Sigmoid colon (tissue), 7 donors: ENCODE measurements at regions of chr9 and their contacts with region 1.

Region 1: DNA sequence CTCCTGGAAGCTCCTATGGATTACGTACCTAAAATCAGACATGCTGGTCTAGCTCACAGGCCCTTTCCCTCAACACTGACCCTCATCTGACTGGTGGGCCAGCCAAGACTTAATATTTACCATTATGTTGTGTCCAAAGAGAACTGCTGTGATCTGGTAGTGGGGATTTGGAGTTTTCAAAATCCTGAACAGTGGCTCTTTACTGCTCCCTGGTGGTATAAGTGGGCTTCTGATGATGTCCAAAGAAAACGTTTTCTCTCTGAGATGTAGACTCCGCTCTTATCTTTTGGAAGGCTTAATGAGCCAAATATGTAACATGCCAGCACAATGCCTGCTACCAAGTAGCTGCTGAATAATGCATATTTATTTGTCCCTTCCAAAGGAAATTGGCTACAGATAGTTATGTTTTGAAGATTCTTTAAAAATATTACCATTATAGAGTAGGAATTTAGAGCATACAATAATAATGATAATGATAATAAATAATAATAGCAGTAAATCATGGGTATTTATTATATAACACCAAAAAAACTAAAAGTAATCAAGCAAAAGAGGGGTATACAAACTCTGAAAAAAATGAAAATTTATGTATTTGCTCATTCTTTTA is 406.6 kb upstream of the TNC start:
- DNase-seq: no peak
- H3K4me3 ChIP-seq: no peak overlapping the region
- H3K27ac ChIP-seq: peak overlapping the region in 3 of 4 donors; percentile 71 to 79 (median 73)
- H3K4me1 ChIP-seq: peaks cover 0 to 58% (median 41%) of the 10 kb centered on the region in 4 donors
- H3K27me3 ChIP-seq: no peaks in the 10 kb centered on the region
- CTCF ChIP-seq: peak; percentile 66 to 86 (median 78)
- EP300 ChIP-seq: no peak
- POLR2A ChIP-seq: no peak

Region 2: DNA sequence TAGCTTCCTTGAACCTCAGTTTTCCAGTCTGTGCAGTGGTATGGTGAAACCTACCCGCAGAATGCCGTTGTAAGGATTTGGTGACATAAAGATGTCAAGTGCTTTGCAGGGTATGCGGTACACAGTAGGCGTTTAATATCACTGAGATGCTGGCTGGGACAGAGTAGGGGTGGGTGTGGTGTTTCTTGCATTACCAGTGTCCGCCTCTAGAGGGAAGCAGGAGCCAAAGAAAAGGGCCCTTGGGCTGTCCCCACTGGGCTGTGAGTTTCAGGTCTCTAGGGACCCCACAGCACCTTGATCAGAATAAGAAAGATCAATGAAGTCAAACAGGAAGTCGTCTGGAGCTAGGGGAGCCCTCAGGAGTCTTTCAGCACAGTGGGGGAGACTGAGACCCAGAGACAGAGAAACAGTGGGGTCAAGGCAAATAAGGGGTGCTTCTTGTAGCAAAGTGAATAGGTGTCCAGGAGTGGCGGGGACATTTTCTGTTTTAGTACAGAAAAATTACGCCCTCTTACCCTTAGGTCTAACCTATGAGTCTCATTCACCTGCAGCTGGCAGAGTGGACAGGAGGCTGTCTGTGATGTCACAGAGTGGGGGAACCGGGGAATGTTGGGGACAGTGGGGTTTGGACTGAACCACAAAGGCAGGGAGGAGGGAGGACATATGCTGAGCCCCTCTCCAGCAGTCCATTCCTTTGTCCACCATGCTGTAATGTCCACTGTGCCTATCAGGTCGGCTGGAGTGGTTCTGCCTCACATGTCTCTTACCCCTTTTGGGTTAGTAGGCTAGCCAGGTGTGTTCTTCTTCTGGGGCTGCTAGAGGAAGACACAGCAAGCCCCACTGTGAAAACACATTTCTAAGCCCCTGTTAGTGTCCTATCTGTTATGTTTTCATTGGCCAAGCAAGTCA is 862.2 kb before region 1 on chr9:
- intact Hi-C with region 1: loop called (anchors 5 kb)
- DNase-seq: no peak
- H3K4me3 ChIP-seq: no peak overlapping the region
- H3K27ac ChIP-seq: no peak overlapping the region
- H3K4me1 ChIP-seq: no peaks in the 10 kb centered on the region
- H3K27me3 ChIP-seq: no peaks in the 10 kb centered on the region
- CTCF ChIP-seq: peak; percentile 41 to 90 (median 69)
- EP300 ChIP-seq: no peak
- POLR2A ChIP-seq: no peak

Region 3: GRCh38 chr9:114738581-114739316 is 785.8 kb before region 1 on chr9:
- intact Hi-C with region 1: loop called (anchors 2 kb)
- DNase-seq: peak; percentile 86
- H3K4me3 ChIP-seq: no peak overlapping the region
- H3K27ac ChIP-seq: no peak overlapping the region
- H3K4me1 ChIP-seq: no peaks in the 10 kb centered on the region
- H3K27me3 ChIP-seq: no peaks in the 10 kb centered on the region
- CTCF ChIP-seq: peak; percentile 65 to 80 (median 74)
- EP300 ChIP-seq: no peak
- POLR2A ChIP-seq: no peak

Region 4: DNA sequence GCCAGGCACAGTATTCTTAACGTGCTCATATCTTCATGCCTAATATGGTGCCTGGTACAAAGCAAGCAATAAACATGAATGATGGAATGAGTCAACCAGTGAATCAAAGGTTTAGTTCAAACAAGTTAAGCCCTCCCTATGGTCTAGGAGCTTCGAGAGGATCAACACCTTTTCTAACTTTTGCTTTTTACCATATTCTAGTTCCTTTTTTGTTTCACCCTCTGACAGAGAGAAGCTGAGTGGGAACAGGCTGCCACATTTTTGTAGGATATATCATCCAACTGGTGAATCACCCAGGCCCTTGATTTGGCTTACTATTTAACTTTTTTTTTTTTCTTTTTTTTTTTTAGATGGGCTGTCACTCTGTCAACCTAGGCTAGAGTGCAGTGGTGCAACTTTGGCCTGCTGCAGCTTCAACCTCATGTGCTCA is 367.3 kb before region 1 on chr9:
- intact Hi-C with region 1: loop called (anchors 5 kb)
- DNase-seq: peak; percentile 66
- H3K4me3 ChIP-seq: no peak overlapping the region
- H3K27ac ChIP-seq: peak overlapping the region; percentile 69 to 85 (median 78)
- H3K4me1 ChIP-seq: peaks cover 0 to 54% (median 46%) of the 10 kb centered on the region in 4 donors
- H3K27me3 ChIP-seq: no peaks in the 10 kb centered on the region
- CTCF ChIP-seq: no peak
- EP300 ChIP-seq: peak in 2 of 4 donors; percentile 28 to 40
- POLR2A ChIP-seq: no peak

Region 5: DNA sequence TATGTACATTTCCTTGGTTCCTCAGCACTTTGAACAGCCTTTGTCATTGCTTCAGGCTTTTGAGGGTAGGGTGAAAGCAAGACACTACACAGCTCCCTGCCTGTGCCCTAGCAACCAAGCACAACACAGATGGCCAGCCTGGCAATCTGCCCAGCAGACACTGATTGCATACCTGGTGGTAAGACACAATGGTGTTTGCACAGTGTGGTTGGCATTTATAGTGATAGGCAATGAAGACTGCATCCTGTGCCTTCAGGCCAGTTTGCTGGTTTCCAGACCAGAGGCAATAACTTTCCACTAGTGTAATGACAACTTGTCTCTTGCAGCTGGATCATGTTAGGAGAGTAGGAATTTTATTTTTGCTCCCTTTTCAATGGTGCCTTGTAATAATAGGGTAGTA is 262.1 kb before region 1 on chr9:
- intact Hi-C with region 1: loop called (anchors 2 kb)
- DNase-seq: peak; percentile 95
- H3K4me3 ChIP-seq: no peak overlapping the region
- H3K27ac ChIP-seq: peak overlapping the region in 3 of 4 donors; percentile 65 to 74 (median 72)
- H3K4me1 ChIP-seq: peaks cover 0 to 42% (median 30%) of the 10 kb centered on the region in 4 donors
- H3K27me3 ChIP-seq: no peaks in the 10 kb centered on the region
- CTCF ChIP-seq: no peak
- EP300 ChIP-seq: peak; percentile 75 to 95 (median 88)
- POLR2A ChIP-seq: no peak

Region 6: DNA sequence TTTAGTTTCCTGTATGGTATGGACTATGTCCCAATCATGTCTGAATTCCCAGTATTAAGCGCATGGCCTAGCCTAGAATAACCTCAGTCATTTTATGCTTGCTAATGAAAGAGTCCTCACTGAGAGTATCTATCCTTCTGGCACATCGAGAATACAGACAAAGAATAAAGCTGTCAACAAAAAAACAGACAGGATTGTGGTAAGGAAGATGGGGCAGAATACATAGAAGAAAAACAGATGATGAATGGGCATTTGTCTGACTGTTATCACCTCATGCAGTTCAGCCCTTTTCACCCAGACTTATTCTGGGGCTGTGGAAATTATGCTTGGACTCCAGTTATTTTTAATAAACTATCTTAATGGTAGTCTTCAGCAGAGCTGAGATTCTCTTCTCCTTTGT is 42.8 kb before region 1 on chr9:
- intact Hi-C with region 1: no loop called
- DNase-seq: no peak
- H3K4me3 ChIP-seq: no peak overlapping the region
- H3K27ac ChIP-seq: no peak overlapping the region
- H3K4me1 ChIP-seq: no peaks in the 10 kb centered on the region
- H3K27me3 ChIP-seq: no peaks in the 10 kb centered on the region
- CTCF ChIP-seq: no peak
- EP300 ChIP-seq: no peak
- POLR2A ChIP-seq: no peak

Region 7: DNA sequence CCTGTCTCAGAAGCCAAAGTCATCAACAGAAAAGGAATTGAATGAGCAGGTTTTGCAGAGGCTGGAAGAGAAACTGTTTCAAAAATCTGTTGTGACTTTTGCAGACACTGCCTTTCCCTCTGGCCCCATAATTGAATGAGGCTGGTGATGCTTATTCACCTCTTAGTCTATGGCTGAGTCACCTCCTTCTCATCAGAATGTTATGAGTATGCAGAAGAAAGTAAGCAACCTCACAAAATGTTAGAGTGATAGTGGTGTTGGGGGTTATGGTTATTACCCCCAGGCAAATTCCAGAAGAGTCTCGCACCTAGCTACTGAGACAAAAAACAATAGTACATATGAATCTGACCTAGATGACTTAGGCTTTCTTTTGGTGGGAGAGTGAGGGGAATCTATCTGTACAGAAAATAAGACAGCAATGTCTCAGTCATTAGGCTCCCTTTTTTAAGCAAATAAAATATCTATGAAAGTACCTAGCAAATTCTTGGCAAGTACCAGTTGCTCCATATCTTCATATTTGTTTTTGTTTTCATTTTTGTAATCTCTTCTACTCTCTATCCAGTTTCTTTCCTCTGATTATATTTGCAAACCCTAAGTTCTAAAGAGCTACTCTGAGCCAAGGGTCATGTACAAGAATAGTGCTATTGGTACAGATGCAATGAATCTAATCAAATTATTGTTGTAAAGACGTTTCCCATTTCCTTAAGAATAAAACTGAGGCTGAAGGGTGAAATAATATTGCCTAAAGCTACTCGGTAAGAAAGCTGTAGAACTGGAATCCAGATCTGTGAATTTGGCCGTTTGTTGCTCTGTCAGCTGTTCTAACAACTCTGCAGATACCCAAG is 91.5 kb after region 1 on chr9:
- intact Hi-C with region 1: no loop called
- DNase-seq: no peak
- H3K4me3 ChIP-seq: no peak overlapping the region
- H3K27ac ChIP-seq: no peak overlapping the region
- H3K4me1 ChIP-seq: peaks cover 0 to 12% (median 7%) of the 10 kb centered on the region in 4 donors
- H3K27me3 ChIP-seq: no peaks in the 10 kb centered on the region
- CTCF ChIP-seq: no peak
- EP300 ChIP-seq: no peak
- POLR2A ChIP-seq: no peak